ENCODE measurements at regions of chr5 and their contacts with region 1.

Region 1: DNA sequence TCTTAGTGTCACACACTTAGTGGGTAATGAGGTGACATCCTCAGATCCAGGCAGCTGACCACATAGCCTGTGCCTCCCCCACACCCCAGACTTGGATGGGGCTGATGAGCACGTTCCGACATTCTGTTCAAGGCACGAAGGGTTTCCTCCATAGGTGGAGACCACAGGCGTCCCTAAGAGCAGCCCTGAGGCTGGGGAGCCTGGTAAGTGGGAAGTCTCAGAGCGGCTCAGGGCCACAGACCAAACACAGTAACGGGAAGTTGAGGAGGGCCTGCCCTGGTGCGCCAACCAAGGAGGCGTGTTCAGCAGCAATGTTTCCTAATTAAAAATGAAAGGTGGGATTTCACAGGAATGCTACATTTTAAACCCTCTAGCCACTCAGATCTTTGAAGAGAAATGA is 102.3 kb upstream of the PHYKPL start:
- DNase-seq: peak in 1 of 5 donors; percentile 19
- H3K4me3 ChIP-seq: no peak overlapping the region
- H3K27ac ChIP-seq: no peak overlapping the region
- H3K4me1 ChIP-seq: no peaks in the 10 kb centered on the region
- H3K27me3 ChIP-seq: no peaks in the 10 kb centered on the region
- CTCF ChIP-seq: no peak
- EP300 ChIP-seq: no peak
- POLR2A ChIP-seq: no peak

Region 2: GRCh38 chr5:178314061-178314630 is 20.7 kb before region 1 on chr5:
- intact Hi-C with region 1: loop called in 1 of 4 experiments (anchors 1 kb)
- DNase-seq: no peak
- H3K4me3 ChIP-seq: no peak overlapping the region
- H3K27ac ChIP-seq: no peak overlapping the region
- H3K4me1 ChIP-seq: no peaks in the 10 kb centered on the region
- H3K27me3 ChIP-seq: no peaks in the 10 kb centered on the region
- CTCF ChIP-seq: no peak
- EP300 ChIP-seq: no peak
- POLR2A ChIP-seq: no peak

Measured in ovary (tissue), 10 donors.